CD4-positive, alpha-beta memory T cell (primary cell): ENCODE measurements at regions of chr22 and their contacts with region 1.

Region 1: DNA sequence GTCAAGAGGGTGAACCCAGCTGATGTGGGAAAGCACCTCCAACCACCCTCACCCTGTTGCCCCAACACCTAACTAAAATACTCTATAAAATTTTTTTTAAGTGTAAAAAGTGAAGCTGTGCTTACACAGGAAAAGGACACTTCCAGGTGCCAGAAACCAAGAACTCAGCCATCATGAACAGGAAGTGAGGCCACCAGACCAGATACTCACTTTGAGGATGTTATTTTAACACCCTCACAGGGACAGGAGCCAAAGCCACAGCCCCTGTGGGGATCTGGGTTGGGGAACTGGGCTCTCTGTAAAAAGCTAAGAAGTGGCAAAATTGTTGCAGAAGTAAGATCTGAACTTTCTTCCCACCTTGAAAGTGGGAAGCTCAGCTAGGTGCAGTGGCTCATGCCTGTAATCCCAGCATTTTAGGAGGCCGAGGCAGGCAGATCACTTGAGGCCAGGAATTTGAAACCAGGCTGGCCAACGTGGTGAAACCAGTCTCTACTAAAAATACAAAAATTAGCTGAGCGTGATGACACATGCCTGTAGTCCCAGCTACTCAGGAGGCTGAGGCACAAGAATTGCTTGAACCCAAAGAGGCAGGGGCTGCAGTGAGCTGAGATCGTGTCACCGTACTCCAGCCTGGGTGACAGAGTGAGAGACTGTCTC is 3.8 kb downstream of the RSPH14 start:
- DNase-seq: peak; percentile 70 to 81 (median 75)
- H3K4me3 ChIP-seq: no peak overlapping the region
- H3K4me3 Mint-ChIP-seq: peak overlapping the region; percentile 56 to 89 (median 68)
- H3K27ac ChIP-seq: peak overlapping the region; percentile 61
- H3K27ac Mint-ChIP-seq: peak overlapping the region; percentile 93 to 99 (median 96)
- H3K4me1 ChIP-seq: peaks cover 62% of the 10 kb centered on the region
- H3K4me1 Mint-ChIP-seq: peaks cover 25 to 70% (median 48%) of the 10 kb centered on the region in 4 donors
- H3K27me3 ChIP-seq: no peaks in the 10 kb centered on the region
- H3K27me3 Mint-ChIP-seq: no peaks in the 10 kb centered on the region

Region 2: DNA sequence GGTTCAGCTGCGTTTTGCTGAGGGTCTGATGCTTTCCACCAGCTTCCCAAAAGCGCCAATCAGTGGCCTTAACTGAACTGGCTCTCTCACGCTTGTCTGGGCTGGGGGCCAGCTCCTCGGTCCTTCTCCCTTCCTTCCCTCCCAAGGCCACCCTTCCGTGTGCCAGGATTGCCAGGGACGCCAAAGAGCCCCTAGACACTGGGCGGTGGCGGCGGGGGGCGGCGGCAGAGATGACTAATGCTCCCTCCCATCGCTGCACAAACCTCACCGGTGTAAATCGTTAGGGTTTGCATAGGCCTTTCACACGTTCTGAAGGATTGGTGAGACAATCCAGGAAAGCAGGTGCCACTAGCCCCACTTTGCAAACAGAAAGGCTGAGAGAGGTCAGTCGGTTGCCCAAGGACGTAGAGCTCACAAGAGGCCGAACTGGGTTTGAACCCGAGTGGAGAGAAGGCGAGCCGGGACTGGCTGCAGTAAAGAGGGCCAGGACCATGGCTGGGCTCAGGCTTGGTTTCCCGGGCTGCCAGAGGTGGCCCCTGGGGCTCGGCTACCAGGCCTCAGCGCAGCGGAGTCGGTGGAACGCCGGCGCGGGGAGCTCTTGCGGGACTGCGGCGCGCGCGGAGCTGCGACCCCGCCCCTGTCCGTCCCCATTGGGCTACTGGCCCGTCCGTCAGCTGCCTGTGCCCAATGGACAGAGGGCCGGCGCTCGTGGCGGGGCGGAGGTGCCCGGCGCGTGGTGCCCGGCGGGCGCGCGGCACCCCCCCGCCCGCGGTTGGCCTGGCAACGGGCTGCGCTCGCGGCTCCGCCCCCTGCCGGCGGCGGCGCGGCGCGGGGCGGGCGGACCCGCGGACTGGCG is 68.3 kb before region 1 on chr22:
- CTCF ChIA-PET with region 1: no interaction called
- POLR2A ChIA-PET with region 1: interaction called, 7 read pairs
- intact Hi-C with region 1: loop called (anchors 5 kb)
- DNase-seq: peak; percentile 88 to 91 (median 89)
- H3K4me3 ChIP-seq: peak overlapping the region in 1 of 2 donors; percentile 48
- H3K4me3 Mint-ChIP-seq: peak overlapping the region; percentile 81 to 95 (median 86)
- H3K27ac ChIP-seq: peak overlapping the region; percentile 52
- H3K27ac Mint-ChIP-seq: peak overlapping the region; percentile 52 to 91 (median 87)
- H3K4me1 ChIP-seq: peaks cover 11% of the 10 kb centered on the region
- H3K4me1 Mint-ChIP-seq: peaks cover 4 to 23% (median 9%) of the 10 kb centered on the region in 4 donors
- H3K27me3 ChIP-seq: peaks cover 3% of the 10 kb centered on the region
- H3K27me3 Mint-ChIP-seq: peaks cover 0 to 2% of the 10 kb centered on the region in 2 donors

Region 3: GRCh38 chr22:23119494-23120414 is 18.3 kb before region 1 on chr22:
- CTCF ChIA-PET with region 1: interaction called, 4 read pairs
- POLR2A ChIA-PET with region 1: interaction called, 16 read pairs
- intact Hi-C with region 1: no loop called
- DNase-seq: peak; percentile 66 to 81 (median 71)
- H3K4me3 ChIP-seq: no peak overlapping the region
- H3K4me3 Mint-ChIP-seq: peak overlapping the region; percentile 58 to 86 (median 67)
- H3K27ac ChIP-seq: peak overlapping the region; percentile 51
- H3K27ac Mint-ChIP-seq: peak overlapping the region; percentile 89 to 99 (median 98)
- H3K4me1 ChIP-seq: peaks cover 16% of the 10 kb centered on the region
- H3K4me1 Mint-ChIP-seq: peaks cover 8 to 24% (median 16%) of the 10 kb centered on the region in 4 donors
- H3K27me3 ChIP-seq: no peaks in the 10 kb centered on the region
- H3K27me3 Mint-ChIP-seq: no peaks in the 10 kb centered on the region

Region 4: GRCh38 chr22:23152315-23153113 is 14.5 kb after region 1 on chr22:
- CTCF ChIA-PET with region 1: interaction called, 4 read pairs
- POLR2A ChIA-PET with region 1: interaction called, 12 read pairs
- intact Hi-C with region 1: no loop called
- DNase-seq: no peak
- H3K4me3 ChIP-seq: no peak overlapping the region
- H3K4me3 Mint-ChIP-seq: no peak overlapping the region
- H3K27ac ChIP-seq: no peak overlapping the region
- H3K27ac Mint-ChIP-seq: peak overlapping the region; percentile 22 to 92 (median 70)
- H3K4me1 ChIP-seq: peaks cover 7% of the 10 kb centered on the region
- H3K4me1 Mint-ChIP-seq: peaks cover 7 to 31% (median 10%) of the 10 kb centered on the region in 4 donors
- H3K27me3 ChIP-seq: no peaks in the 10 kb centered on the region
- H3K27me3 Mint-ChIP-seq: no peaks in the 10 kb centered on the region